Head of caudate nucleus (tissue), 42 donors: ENCODE measurements at regions of chr11 and their contacts with region 1.

Region 1: DNA sequence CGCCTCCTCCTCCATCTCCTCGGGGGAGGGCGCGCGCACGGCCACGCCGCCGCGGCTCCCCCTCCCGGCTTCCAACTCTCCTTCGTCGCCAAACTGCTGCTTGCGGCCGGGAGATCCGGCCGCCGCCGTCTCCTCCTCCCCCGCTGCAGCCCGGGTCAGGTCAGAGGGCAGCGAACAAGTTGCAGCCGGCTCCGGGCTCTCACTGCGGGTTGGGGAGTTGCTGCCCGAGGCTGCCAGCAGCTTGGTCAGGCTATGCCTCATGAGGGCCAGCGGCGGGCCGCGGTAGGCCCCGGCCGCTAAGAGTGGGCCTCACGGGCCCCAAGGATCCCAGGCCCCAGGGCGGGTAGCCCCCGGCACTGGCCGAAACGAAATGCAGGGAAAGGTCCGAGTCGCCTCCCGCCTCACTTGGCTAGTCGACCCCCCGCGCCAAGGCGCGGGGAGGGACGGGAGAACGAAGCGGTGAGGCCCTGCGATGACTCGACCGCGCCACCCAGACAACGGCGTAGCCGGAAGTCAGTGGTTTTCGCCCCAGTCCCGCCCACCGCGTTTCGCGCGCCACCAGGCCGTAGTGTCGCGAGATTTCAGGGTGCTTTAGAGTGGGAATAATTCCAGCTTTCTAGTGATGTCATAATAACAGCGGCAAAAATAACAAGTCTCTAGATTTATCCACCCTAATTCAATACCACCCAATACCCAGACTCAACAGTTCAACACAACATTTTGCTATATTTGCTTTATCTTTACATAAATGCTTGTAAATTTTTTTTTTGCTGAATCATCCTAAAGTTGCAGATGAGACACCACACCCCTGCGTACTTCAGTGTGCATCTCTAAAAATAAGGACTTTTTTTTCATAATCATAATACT is at the start of gene CREBZF:
- DNase-seq: peak; percentile 87 to 98 (median 96)

Region 2: DNA sequence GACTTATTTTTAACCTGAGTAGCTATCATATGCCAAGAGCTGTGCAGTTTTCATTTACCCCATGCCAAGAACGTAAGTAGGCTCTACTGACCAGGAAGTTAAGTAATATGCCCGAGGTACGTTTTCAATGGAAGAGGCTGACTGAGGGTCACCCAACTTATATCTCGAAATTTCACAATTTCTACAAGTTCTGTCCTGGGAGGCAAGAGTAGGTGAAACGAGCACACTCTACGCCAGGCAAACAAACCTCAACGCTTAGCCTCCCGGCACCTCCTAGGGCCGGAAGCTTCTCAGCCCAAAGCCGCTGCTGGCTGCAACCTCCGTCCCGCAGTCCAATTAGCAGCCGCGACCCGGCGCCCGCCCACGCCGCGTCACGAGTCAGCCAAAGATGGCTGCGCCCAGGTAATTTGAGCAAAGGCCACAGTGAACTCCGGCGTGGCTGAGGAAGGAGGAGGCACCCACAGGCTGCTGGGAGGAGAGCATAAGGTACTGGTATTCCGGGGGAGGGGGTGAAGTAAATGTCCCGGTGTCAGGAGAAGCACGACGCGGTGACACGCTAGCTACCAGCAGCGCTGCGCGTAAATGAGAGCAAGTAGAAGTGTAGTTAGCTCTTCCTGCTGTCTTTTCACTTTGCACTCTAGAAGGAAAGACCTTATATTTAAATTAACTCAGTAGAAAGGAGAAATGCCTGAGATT is 17.1 kb before region 1 on chr11 and contains the start of gene TMEM126A:
- intact Hi-C with region 1: loop called (anchors 2 kb)
- DNase-seq: peak; percentile 86 to 96 (median 93)

Region 3: GRCh38 chr11:85725510-85726258 is 60.8 kb after region 1 on chr11:
- intact Hi-C with region 1: no loop called
- DNase-seq: no peak